ENCODE measurements at regions of chr1 and their contacts with region 1.

Region 1: DNA sequence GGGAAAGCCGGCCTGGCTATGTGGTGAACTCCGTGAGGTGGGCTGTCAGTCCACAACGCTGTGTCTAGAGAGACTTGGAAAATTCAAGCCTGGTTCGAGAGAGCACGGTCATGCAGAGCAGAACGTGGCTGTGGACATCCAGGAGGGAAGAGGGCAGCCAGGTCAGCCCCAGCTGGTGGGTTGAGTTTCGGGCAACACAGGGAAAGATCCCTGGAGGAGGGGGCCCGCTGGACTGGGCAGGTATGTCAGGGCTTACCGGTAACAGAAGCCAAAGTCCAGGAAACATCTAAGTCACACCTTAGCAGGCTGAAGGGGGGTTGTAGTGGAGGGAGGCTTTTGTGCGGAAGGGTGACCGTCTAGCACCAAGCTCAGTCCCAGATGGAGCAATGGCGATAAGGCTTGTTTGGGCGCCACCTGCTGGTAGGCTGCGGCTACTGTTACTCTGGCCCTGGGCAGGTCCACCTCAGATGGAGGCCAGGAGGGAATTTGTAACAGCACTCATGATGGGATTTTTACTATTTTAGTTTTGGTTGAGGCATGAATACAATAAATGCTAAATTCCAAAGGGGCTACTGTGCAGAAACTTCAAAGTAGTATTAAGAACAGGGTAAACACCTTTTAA is 143.3 kb upstream of the ZNF644 start:
- DNase-seq: peak; percentile 29
- ATAC-seq: peak; percentile 97
- H3K4me3 ChIP-seq: peak overlapping the region in 1 of 3 experiments; percentile 25; a peak in 1 of 6 replicates
- H3K27ac ChIP-seq: no peak overlapping the region
- H3K4me1 ChIP-seq: no peaks in the 10 kb centered on the region
- H3K27me3 ChIP-seq: peaks cover 1 to 9% of the 10 kb centered on the region in 2 experiments; a peak in 2 of 5 replicates
- CTCF ChIP-seq: peak; percentile 93
- EP300 ChIP-seq: no peak
- POLR2A ChIP-seq: no peak
- RAD21 ChIP-seq: peak; percentile 67; the same call in 1 of the 2 replicates

Region 2: DNA sequence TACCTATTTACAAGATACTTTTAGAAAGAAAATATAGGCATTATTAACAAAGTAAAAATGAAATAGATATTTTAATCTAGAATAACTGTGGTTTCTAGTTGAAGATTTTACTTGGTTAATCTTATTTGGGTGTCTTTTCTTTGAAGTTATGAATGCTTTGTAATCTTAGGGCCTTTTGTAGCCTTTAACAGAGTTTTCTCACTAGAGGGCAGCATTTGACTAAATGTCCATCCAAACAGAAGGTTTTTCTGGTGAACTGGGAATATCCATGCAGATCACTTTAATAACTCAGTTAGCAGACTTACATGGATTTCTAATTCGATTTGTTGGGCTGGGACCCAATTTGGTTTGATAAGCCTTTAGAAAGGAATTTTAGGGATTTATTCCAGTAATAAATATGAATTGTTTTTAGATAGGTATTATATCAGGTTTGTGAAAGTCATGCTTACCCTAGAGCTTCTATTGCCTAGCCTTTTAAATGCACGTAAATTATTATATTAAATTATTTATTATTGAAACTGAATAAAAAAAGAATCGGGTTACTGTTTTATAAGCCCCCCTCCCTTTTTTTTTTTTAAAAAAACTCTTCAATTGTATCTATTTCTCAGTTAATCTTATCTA is 1050.5 kb before region 1 on chr1:
- CTCF ChIA-PET with region 1: no interaction called
- POLR2A ChIA-PET with region 1: no interaction called
- in situ Hi-C with region 1: loop called (anchors 25 kb)
- intact Hi-C with region 1: no loop called
- DNase-seq: peak; percentile 50
- ATAC-seq: peak; percentile 47; the same call in 2 of the 3 replicates
- H3K4me3 ChIP-seq: no peak overlapping the region
- H3K27ac ChIP-seq: no peak overlapping the region
- H3K4me1 ChIP-seq: no peaks in the 10 kb centered on the region
- H3K27me3 ChIP-seq: no peaks in the 10 kb centered on the region
- CTCF ChIP-seq: peak; percentile 67
- EP300 ChIP-seq: no peak
- POLR2A ChIP-seq: no peak
- RAD21 ChIP-seq: no peak

Region 3: DNA sequence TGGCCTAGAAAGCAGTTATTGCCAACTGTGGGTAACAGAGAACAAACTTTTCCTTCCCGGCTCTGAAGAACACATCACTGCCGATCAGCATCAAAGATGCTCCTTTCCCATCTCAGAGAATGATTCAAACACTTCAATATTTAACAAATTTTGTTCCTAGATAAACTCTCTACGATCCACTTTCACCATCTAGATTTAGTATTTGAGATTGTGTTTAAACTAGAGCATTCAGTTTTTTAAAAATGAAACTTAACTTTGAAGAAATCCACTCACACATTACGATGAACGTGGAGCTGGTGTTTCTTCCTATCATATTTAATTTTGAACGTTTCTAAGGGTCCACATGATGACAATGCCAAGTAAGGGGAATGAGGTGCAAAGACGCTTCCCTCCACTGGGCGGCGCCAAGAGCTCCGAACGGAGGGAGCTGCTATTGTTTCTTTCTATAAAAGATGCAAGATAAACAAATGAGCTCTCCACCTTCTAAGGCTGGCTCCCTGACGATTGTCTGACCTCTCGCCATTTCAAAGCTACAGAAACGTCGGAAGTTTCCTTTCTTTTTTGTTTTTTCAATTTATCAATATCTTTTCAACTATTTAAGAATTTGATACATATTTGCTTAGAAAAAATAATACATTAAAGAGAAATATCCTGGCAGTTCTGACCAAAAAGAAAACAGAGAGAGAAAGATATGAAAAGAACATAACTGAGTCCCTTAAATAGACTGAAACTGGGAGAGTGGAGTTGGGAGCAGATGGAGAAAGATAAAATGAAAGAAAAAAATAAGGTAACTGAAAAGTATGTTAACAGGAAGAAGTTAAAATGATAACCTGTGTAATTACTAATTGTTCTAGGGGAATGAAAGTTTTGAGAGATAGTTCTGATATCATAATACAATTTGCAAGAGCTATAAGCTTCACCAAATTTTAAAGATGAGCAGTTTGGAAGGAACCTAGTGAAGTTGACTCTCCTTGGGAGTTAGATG is 443.6 kb before region 1 on chr1:
- CTCF ChIA-PET with region 1: interaction called, 4 read pairs
- POLR2A ChIA-PET with region 1: no interaction called
- in situ Hi-C with region 1: loop called (anchors 10 kb)
- intact Hi-C with region 1: loop called (anchors 1 kb)
- DNase-seq: peak; percentile 42
- ATAC-seq: peak; percentile 38; the same call in 2 of the 3 replicates
- H3K4me3 ChIP-seq: no peak overlapping the region
- H3K27ac ChIP-seq: no peak overlapping the region
- H3K4me1 ChIP-seq: 0 out of 2 replicates have a peak, but pooled peaks cover 13% of the 10 kb centered on the region
- H3K27me3 ChIP-seq: peaks cover 10 to 59% of the 10 kb centered on the region in 2 experiments; a peak in 4 of 5 replicates
- CTCF ChIP-seq: peak; percentile 74
- EP300 ChIP-seq: no peak
- POLR2A ChIP-seq: no peak
- RAD21 ChIP-seq: 0 out of 2 replicates have a peak, but pooled peaks have one; percentile 38

Region 4: DNA sequence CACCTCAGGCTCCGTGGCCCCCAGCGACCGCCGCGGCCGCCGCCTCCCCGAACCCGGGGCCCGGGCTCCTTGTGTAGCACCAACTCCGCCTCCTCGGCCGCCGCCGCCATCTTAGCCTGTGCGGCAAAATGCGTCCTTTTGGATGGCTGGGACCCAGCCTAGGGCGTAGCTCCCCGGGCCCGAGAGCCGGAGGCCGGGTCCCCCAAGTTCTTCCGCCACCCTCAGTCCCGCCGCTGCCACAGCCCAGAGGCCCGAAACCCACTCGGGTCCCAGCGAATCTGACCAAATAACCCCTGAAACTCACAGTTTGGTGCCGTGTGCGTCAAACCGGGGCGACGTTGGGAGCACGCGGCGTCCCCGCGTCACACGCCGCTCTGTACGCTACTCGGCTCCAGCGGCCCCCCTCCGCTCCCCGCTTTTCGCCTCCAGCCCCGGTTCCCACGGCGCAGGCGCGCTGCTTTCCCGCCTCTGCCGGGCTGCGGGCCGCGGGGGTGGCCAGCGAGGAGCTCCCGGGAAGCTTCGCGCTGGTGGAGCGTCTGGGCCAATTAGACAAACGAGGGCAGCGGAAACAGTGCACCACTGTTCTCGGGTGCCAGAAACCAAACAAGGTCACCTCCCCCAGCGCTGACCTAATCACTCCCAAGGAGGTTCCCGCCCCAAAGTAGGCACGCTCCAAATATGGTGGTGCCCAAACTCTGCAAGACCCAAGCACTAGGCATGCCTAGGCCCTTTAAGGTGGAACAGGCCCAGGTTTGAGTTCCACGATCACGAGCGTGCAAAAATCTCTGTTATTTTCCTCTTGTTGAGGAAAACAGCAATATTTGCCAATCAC is 143.2 kb before region 1 on chr1 and contains the start of gene ZNF644:
- CTCF ChIA-PET with region 1: no interaction called
- POLR2A ChIA-PET with region 1: no interaction called
- in situ Hi-C with region 1: no loop called
- intact Hi-C with region 1: loop called (anchors 1 kb)
- DNase-seq: peak; percentile 92
- ATAC-seq: peak; percentile 89
- H3K4me3 ChIP-seq: peak within 1 kb of the TSS; percentile 77 to 95 (median 92)
- H3K27ac ChIP-seq: peak within 1 kb of the TSS; percentile 100
- H3K4me1 ChIP-seq: peaks cover 68% of the 10 kb centered on the region
- H3K27me3 ChIP-seq: no peaks in the 10 kb centered on the region; a peak in 1 of 5 replicates
- CTCF ChIP-seq: no peak
- EP300 ChIP-seq: no peak
- POLR2A ChIP-seq: peak; percentile 65 to 83; a peak in 3 of 4 replicates
- RAD21 ChIP-seq: peak; percentile 16; the same call in 1 of the 2 replicates
- total RNA-seq, gene ZNF644: 51.7 and 66.7 TPM in 2 replicates

Region 5: DNA sequence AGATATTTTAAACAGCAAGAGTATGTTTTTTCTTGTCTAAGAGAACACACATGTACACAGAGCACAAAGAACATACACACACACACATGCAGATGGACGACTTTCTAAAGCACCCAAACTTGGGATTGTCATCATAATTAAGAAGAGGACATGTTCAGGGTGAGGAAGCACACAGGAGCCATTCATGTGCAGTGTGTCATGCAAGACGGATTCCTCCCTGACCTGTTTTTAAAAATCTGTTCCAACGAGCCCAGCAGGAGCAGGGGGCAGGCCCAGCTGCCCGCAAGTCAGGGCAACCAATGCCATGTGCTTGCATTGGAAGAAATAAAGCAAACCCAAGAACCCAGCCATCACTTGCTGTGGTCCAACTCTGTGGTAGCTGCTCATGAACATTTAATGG is 24.0 kb after region 1 on chr1:
- CTCF ChIA-PET with region 1: no interaction called
- POLR2A ChIA-PET with region 1: no interaction called
- in situ Hi-C with region 1: no loop called
- intact Hi-C with region 1: no loop called
- DNase-seq: no peak
- ATAC-seq: no peak
- H3K4me3 ChIP-seq: no peak overlapping the region
- H3K27ac ChIP-seq: no peak overlapping the region
- H3K4me1 ChIP-seq: no peaks in the 10 kb centered on the region
- H3K27me3 ChIP-seq: no peaks in the 10 kb centered on the region; a peak in 1 of 5 replicates
- CTCF ChIP-seq: no peak
- EP300 ChIP-seq: no peak
- POLR2A ChIP-seq: no peak
- RAD21 ChIP-seq: no peak

Region 6: DNA sequence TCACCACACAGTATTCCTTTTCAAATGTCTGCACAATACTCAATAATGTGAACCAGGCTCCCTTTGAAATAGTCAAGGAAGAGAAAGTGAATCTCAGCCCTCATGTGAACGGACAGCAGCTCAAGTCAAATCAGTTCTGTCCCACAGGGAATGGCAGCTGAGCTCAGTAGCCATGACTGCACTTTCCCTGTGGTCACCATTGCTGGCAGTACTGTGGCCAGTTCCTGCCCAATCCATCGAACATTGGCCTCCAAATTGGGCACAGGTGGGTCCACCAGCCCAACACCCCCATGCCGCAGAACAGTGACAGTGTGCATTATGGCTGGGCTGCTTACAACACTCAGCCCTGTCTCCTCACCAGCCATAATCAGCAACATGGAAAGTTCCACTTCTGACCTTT is 38.2 kb after region 1 on chr1:
- CTCF ChIA-PET with region 1: no interaction called
- POLR2A ChIA-PET with region 1: no interaction called
- in situ Hi-C with region 1: no loop called
- intact Hi-C with region 1: no loop called
- DNase-seq: no peak
- ATAC-seq: no peak
- H3K4me3 ChIP-seq: no peak overlapping the region
- H3K27ac ChIP-seq: no peak overlapping the region
- H3K4me1 ChIP-seq: no peaks in the 10 kb centered on the region
- H3K27me3 ChIP-seq: no peaks in the 10 kb centered on the region; a peak in 1 of 5 replicates
- CTCF ChIP-seq: no peak
- EP300 ChIP-seq: no peak
- POLR2A ChIP-seq: no peak
- RAD21 ChIP-seq: no peak

Measured in HepG2 (cell line).